ENCODE measurements at regions of chr1 and their contacts with region 1.

Region 1: DNA sequence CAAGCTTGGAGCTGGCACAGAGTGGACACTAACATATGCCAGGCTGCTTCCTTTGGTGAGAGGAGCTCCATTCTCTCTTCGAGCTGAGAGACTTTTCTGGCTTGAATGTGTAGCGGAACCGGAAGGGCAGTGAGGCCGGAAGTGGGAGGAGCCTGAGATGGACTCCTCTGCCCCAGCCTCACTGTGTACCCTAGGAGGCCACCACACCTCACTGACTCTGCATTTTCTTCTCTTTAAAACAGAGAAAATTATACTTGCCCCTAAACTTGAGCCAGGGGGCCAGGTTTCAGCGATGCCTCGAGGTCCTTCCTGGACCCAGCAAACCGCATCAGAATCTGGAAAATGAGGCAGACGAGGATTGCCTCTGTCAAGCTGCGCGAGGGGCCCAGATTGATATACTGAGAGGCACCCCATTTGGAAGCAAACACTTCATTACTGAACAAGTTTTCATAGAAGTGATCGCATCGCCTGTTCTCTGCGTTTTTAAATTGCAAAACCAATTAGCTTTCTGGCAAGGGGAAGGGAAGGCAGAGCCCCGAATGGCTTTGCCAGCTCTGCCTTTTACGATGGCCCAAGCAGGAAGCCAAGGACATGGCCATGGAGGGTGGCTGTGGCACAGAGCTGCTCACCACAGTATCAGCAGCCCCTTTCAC is 708.1 kb downstream of the PTPRU start:
- DNase-seq: no peak
- H3K4me3 ChIP-seq: no peak overlapping the region
- H3K27ac ChIP-seq: no peak overlapping the region
- H3K4me1 ChIP-seq: no peaks in the 10 kb centered on the region
- H3K27me3 ChIP-seq: no peaks in the 10 kb centered on the region
- CTCF ChIP-seq: no peak
- POLR2A ChIP-seq: no peak

Region 2: DNA sequence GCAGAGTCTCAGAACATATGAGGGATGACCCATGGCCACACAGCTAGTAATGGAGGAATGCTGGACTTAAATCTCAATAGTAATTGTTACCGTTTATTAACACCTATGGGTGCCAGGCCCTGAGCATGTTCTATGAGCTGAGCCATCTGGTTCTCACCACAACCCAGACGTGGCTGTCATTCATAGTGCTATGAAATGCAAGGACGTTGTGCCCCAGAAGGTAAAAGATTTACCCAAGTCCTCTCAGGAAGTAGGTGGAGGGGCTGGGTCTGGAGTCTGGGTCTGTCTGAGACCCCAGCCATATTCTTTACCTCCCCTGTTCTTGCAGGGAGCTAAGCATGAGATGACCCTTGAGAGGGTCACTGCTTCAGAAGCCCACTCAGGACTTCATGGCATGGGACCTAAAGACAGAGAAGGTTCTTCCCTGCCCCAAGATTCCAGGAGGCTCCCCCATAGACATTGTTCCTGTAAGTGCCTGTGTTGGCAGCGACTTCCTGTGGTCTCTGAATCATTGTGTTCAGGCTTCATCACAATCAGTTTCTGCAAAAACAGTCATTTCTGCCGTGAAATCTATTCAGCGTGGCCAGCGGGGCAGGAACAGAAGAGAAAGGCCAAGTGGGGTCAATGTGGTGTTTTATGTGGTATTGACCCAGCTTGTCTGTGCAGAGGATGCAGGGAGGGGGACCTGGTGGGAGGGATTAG is 232.6 kb before region 1 on chr1:
- intact Hi-C with region 1: no loop called
- DNase-seq: no peak
- H3K4me3 ChIP-seq: no peak overlapping the region
- H3K27ac ChIP-seq: no peak overlapping the region
- H3K4me1 ChIP-seq: no peaks in the 10 kb centered on the region
- H3K27me3 ChIP-seq: no peaks in the 10 kb centered on the region
- CTCF ChIP-seq: no peak
- POLR2A ChIP-seq: no peak

Region 3: DNA sequence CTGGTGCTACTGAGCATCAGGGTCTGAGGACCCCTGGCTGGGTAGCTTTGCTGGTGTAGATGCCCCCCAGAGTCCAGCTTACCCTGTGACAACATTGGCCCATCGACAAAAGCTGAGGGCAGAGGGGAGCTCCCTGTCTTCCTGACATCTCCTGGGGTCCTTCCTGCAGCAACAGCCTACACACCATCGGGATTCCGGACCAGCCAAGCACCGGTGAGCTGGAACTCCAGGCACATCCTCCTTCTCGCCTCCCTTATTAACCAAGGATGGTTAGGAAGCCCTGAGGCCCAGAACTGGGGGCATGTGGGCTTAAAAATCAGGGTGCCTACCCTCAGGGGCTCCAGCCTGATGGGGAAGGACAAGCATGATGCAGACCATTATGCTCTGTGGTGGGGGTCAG is 50.1 kb before region 1 on chr1:
- intact Hi-C with region 1: loop called (anchors 2 kb)
- DNase-seq: no peak
- H3K4me3 ChIP-seq: no peak overlapping the region
- H3K27ac ChIP-seq: no peak overlapping the region
- H3K4me1 ChIP-seq: no peaks in the 10 kb centered on the region
- H3K27me3 ChIP-seq: no peaks in the 10 kb centered on the region
- CTCF ChIP-seq: no peak
- POLR2A ChIP-seq: no peak